MCF 10A (cell line): ENCODE measurements at regions of chr9 and their contacts with region 1.

Region 1: GRCh38 chr9:76393963-76394679 is at the start of gene RFK:
- DNase-seq: peak; percentile 86
- H3K4me3 Mint-ChIP-seq: peak within 1 kb of the TSS; percentile 98
- H3K27ac Mint-ChIP-seq: peak within 1 kb of the TSS; percentile 97
- H3K4me1 Mint-ChIP-seq: peaks cover 6% of the 10 kb centered on the region
- H3K27me3 Mint-ChIP-seq: no peaks in the 10 kb centered on the region
- CTCF ChIP-seq: peak; percentile 14
- total RNA-seq, gene RFK: 22.6 and 27.0 TPM in 2 replicates

Region 2: GRCh38 chr9:76194896-76195295 is 199.2 kb before region 1 on chr9:
- CTCF ChIA-PET with region 1: no interaction called
- POLR2A ChIA-PET with region 1: no interaction called
- intact Hi-C with region 1: no loop called
- DNase-seq: no peak
- H3K4me3 Mint-ChIP-seq: no peak overlapping the region
- H3K27ac Mint-ChIP-seq: no peak overlapping the region
- H3K4me1 Mint-ChIP-seq: no peaks in the 10 kb centered on the region
- H3K27me3 Mint-ChIP-seq: no peaks in the 10 kb centered on the region
- CTCF ChIP-seq: no peak

Region 3: DNA sequence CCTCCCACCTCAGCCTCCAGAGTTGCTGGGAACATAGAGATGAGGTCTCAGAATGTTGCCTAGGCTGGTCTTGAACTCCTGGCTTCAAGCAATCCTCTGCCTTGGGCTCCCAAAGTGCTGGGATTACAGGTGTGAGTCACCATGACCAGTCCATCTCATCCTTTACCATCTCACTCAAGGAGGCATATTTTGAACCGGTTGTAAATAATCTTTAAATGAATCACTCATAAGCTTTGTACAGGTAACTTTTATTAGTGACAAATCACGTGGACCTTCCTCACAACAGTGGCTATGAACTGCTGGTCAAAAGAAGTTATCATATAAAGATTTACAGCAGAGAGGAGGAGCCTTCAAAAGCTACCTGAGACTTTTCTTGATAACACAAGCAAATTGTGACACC is 70.6 kb before region 1 on chr9:
- CTCF ChIA-PET with region 1: no interaction called
- POLR2A ChIA-PET with region 1: no interaction called
- intact Hi-C with region 1: no loop called
- DNase-seq: peak; percentile 6
- H3K4me3 Mint-ChIP-seq: no peak overlapping the region
- H3K27ac Mint-ChIP-seq: no peak overlapping the region
- H3K4me1 Mint-ChIP-seq: peaks cover 6% of the 10 kb centered on the region
- H3K27me3 Mint-ChIP-seq: no peaks in the 10 kb centered on the region
- CTCF ChIP-seq: no peak

Region 4: DNA sequence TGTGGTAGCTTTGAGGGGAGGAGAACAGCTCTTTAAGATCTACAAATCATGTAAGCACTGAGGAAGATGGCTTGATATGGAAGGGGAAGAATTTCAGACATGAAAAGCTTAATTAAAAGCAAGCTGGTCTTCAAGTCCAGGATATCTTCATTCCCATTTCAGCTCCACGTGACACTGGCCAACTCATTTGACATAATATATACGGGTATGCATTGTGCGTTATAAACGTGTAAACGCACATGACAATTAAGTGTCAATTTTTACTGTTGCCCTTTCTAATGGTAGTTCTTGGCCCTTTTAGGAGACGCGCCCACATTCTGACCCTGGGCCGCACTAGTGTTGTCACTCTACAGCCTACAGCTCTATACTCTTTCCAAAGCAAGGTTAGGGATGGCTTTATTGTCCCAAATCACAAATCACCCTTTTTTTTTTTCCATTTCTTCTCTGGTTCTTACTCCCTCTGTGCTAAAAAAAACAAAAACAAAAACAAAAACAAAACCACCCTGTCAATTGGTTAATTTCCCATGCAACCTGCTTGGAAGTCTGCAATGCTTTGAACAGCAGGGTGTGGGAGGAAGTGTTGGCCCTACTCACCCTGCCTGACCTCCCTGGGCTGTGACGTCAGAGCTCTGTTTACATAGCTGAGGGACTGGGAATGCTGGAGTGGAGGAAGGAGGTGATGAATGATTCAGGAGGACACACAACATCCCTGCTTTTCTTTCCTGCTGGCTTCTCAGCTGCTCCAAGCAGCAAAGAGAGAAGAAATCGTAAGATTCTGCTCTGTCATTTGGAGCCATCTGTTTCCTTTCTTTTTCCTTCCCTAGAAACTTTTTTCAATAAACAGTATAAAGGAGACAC is 19.2 kb before region 1 on chr9:
- CTCF ChIA-PET with region 1: interaction called, 8 read pairs
- POLR2A ChIA-PET with region 1: interaction called, 24 read pairs
- intact Hi-C with region 1: no loop called
- DNase-seq: peak; percentile 86
- H3K4me3 Mint-ChIP-seq: peak overlapping the region; percentile 16
- H3K27ac Mint-ChIP-seq: peak overlapping the region; percentile 54
- H3K4me1 Mint-ChIP-seq: peaks cover 37% of the 10 kb centered on the region
- H3K27me3 Mint-ChIP-seq: no peaks in the 10 kb centered on the region
- CTCF ChIP-seq: no peak

Region 5: GRCh38 chr9:76451234-76451633 is 57.1 kb after region 1 on chr9:
- CTCF ChIA-PET with region 1: interaction called, 14 read pairs
- POLR2A ChIA-PET with region 1: interaction called, 9 read pairs
- intact Hi-C with region 1: no loop called
- DNase-seq: peak; percentile 40
- H3K4me3 Mint-ChIP-seq: no peak overlapping the region
- H3K27ac Mint-ChIP-seq: no peak overlapping the region
- H3K4me1 Mint-ChIP-seq: peaks cover 21% of the 10 kb centered on the region
- H3K27me3 Mint-ChIP-seq: no peaks in the 10 kb centered on the region
- CTCF ChIP-seq: no peak